IMR-90 (cell line): ENCODE measurements at regions of chr3 and their contacts with region 1.

Region 1: DNA sequence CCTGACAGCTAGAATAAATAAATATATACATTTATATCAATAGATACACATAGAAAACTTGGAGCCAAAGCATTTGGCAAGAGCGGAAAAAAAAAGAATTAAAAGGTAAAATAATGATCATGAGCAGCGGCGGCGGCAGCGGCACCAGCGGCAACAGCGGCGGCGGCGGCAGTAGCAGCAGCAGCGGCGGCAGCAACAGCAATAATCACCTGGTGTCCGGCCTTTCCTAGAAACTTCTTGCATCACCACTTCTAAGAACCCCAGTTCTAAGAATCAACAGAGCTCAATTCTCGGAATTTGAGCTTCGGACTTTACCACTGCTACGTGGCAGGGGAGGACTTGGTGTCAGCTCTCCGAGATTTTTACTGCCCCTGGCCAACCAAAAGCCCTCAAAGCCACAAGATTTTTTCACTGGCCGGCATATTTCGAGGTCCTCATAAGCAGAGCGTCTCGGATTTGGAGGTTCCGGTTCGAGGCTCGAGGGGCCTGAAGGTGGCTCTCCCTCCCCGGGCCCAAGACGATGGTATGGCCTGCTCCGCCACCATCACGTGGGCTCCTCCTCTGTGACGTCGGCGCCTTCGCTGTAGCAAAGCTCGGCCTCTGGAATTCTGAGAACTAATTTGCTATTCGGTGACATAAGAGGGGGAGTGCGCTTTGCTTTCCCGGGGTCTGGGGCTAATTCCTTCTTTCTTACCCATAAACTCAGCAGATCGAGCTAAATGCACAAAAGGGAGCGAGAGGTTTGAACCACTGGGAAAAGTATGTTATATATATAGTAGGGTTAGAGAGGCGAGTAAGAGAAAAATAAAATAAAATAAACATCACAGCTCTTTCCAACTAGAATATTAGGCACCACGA is at the start of gene BCL6:
- DNase-seq: peak; percentile 99
- ATAC-seq: peak; percentile 65
- H3K4me3 ChIP-seq: peak within 1 kb of the TSS; percentile 83
- H3K27ac ChIP-seq: peak within 1 kb of the TSS; percentile 97
- H3K4me1 ChIP-seq: peaks cover 7% of the 10 kb centered on the region
- H3K27me3 ChIP-seq: no peaks in the 10 kb centered on the region
- CTCF ChIP-seq: no peak
- POLR2A ChIP-seq: peak; percentile 96
- RAD21 ChIP-seq: peak; percentile 27; the same call in 1 of the 2 replicates
- total RNA-seq, gene BCL6: 21.4 and 22.6 TPM in 2 replicates

Region 2: DNA sequence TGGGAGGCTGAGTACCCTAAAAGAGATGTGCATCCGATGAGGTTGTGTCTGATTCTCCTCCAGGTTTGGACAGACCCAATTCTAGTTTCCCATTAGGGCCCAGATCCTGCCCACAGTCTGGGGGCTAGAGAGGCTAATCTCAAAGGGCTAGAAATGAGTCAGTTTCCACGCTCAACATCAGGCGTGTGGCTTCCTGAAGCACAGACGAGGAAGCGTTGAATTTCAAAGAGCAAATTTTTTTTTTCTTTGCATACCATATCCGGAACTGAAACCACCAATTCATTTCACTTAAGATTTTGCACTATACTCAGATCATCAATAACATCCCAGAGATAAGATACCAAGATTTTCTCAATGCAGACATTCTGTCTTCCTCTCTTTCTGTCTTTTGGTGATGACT is 173.6 kb after region 1 on chr3:
- CTCF ChIA-PET with region 1: interaction called, 4 read pairs
- POLR2A ChIA-PET with region 1: no interaction called
- dilution Hi-C with region 1: no loop called
- in situ Hi-C with region 1: no loop called
- intact Hi-C with region 1: loop called (anchors 1 kb)
- DNase-seq: no peak
- ATAC-seq: no peak
- H3K4me3 ChIP-seq: no peak overlapping the region
- H3K27ac ChIP-seq: no peak overlapping the region
- H3K4me1 ChIP-seq: peaks cover 27% of the 10 kb centered on the region
- H3K27me3 ChIP-seq: no peaks in the 10 kb centered on the region
- CTCF ChIP-seq: no peak
- POLR2A ChIP-seq: no peak
- RAD21 ChIP-seq: no peak

Region 3: DNA sequence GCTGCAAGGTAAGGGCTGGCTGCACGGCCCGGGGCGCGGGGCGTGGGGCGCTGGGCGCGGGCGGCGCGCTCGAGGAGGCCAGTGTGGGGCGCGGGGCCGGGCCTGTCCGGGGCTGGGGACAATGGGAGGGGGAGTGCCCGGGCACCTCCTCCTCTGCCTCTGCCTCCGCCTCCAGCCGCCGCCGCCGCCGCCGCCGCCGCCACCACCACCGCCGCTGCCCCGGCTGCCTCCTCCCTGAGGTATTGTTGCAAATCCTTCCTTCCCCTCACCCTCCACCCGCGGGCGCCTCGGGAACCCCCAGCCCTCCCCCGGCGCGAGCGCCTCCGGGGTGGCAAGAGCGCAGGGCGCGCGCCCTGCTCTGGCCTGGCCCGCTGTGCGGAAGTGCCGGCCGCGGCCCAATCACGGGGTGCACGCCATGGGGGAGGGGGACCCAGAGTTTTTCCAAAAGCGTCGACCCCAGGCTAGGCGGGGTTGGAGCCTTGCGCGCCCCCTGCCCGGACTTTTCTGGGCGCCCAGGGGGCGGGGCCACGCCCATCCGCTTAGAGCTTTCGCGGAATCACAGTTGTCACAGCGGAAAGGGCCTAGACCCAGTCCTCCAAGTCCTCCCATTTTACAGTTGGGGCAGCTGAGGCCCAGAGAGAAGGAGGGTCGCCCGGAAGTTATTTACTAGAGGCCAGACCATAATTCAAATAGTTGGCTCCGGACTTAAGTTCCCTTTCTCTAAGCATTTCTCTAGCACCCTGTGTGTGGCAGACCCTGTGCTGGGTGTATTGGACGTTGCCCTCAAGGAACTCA is 408.8 kb after region 1 on chr3 and contains the start of gene LPP:
- CTCF ChIA-PET with region 1: interaction called, 4 read pairs
- POLR2A ChIA-PET with region 1: interaction called, 15 read pairs
- dilution Hi-C with region 1: no loop called
- in situ Hi-C with region 1: no loop called
- intact Hi-C with region 1: loop called (anchors 1 kb)
- DNase-seq: peak; percentile 77
- ATAC-seq: peak; percentile 86
- H3K4me3 ChIP-seq: peak within 1 kb of the TSS; percentile 83
- H3K27ac ChIP-seq: peak within 1 kb of the TSS; percentile 97
- H3K4me1 ChIP-seq: peaks cover 30% of the 10 kb centered on the region
- H3K27me3 ChIP-seq: no peaks in the 10 kb centered on the region
- CTCF ChIP-seq: 0 out of 2 replicates have a peak, but pooled peaks have one; percentile 4
- POLR2A ChIP-seq: no peak; the same call in 1 of the 2 replicates
- RAD21 ChIP-seq: peak; percentile 24; the same call in 1 of the 2 replicates
- total RNA-seq, gene LPP: 111 and 130 TPM in 2 replicates

Region 4: DNA sequence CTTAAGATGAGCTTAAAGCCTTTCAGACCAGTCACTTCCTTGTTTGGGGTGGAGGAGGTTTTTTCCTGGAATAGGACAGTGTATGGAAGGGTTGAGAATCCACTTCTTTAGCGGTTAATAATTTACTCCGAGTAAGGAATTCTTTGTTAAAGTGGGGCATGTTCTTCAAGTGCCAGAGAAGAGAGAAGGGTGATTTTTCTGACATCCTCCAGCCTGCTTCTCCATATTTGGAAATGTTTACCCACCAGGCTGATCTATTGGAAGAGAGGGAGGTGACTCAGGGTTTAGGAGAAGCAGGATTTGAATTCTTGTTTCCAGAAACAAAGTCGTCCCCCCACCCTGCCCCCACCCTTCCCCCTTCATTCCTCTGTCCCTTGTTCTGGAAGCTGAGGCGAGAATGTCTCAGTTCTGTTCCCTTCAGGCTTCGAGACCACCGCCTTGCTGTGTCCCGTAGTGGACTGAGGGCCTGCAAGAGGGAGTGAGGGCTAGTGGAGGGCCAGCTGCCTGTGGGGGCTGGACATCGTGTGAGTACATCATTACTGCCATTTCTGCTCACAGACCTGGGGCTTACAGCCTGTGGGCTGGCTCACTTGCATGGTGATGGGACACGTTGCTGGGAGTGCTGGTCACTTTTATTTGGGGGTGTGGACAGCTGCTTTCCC is 467.0 kb after region 1 on chr3:
- CTCF ChIA-PET with region 1: interaction called, 3 read pairs
- POLR2A ChIA-PET with region 1: no interaction called
- dilution Hi-C with region 1: no loop called
- in situ Hi-C with region 1: no loop called
- intact Hi-C with region 1: loop called (anchors 1 kb)
- DNase-seq: peak; percentile 89
- ATAC-seq: peak; percentile 67
- H3K4me3 ChIP-seq: peak overlapping the region; percentile 43
- H3K27ac ChIP-seq: peak overlapping the region; percentile 100
- H3K4me1 ChIP-seq: peaks cover 42% of the 10 kb centered on the region
- H3K27me3 ChIP-seq: no peaks in the 10 kb centered on the region
- CTCF ChIP-seq: no peak
- POLR2A ChIP-seq: no peak
- RAD21 ChIP-seq: no peak

Region 5: DNA sequence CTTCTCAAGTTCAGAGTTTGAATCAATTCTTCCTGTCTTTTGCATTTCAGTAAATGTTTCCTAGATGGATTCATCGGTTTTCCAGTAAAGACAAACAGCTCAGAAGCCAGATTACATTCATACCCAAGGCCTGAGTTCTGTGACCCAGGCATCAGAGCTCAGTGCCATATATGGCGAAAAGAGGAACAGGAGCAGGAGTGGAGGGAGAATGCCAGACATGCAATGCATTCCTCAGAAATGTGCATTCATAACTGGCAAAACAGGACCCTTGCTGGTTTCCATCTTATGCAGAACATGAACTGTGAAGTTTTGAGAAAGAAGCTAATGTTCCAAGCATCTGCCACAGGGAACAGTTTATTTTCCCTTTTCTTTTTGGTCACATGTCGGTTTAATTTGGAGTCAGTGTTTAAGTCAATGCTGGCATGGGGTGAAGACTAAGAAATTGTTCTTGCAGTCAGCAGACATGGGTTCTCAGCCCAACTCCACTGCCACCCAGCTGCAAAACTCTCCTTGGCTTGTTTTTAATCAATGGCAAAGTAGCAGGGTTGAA is 525.1 kb after region 1 on chr3:
- CTCF ChIA-PET with region 1: interaction called, 6 read pairs
- POLR2A ChIA-PET with region 1: interaction called, 4 read pairs
- dilution Hi-C with region 1: no loop called
- in situ Hi-C with region 1: loop called (anchors 10 kb)
- intact Hi-C with region 1: loop called (anchors 1 kb)
- DNase-seq: peak; percentile 96
- ATAC-seq: peak; percentile 50
- H3K4me3 ChIP-seq: no peak overlapping the region
- H3K27ac ChIP-seq: peak overlapping the region; percentile 96
- H3K4me1 ChIP-seq: peaks cover 45% of the 10 kb centered on the region
- H3K27me3 ChIP-seq: no peaks in the 10 kb centered on the region
- CTCF ChIP-seq: no peak
- POLR2A ChIP-seq: no peak
- RAD21 ChIP-seq: peak; percentile 33; the same call in 1 of the 2 replicates

Region 6: DNA sequence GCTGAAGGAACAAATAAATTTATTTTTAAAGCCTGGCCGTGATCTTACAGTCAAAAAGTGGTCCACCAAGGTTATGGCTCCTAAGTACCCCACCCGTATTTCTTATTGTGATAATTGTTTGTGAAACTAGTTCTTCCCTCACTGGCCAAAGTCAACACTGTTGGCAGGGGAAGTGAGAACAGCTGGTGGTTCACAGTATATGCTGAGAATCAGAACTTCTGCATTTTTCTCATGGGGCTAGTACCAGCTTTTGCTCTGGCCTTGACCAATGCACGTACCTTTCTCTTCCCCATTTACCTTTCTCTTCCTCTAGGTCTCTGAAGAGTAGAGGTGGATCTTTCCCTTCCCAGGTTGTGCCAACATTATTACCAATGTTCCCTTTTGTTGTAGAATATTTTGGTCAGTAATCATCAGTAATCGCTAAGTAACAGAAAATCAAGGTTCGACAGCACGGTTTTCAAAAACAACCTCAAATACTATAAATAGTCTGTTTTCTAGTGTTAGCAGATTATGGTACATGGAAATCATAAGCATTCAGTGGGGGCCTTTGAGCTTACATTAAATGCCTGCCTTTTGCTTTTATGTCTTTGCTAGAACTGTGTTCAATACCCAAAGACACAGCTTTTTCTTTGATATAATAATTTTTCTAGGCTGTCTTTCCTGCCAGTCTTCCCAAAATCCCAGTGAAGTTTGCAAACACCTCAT is 676.6 kb after region 1 on chr3:
- CTCF ChIA-PET with region 1: interaction called, 3 read pairs
- POLR2A ChIA-PET with region 1: no interaction called
- dilution Hi-C with region 1: no loop called
- in situ Hi-C with region 1: loop called (anchors 25 kb)
- intact Hi-C with region 1: no loop called
- DNase-seq: no peak
- ATAC-seq: no peak
- H3K4me3 ChIP-seq: no peak overlapping the region
- H3K27ac ChIP-seq: no peak overlapping the region
- H3K4me1 ChIP-seq: peaks cover 5% of the 10 kb centered on the region
- H3K27me3 ChIP-seq: no peaks in the 10 kb centered on the region
- CTCF ChIP-seq: no peak
- POLR2A ChIP-seq: no peak
- RAD21 ChIP-seq: no peak

Region 7: GRCh38 chr3:188683032-188683521 is 937.6 kb after region 1 on chr3:
- CTCF ChIA-PET with region 1: interaction called, 3 read pairs
- POLR2A ChIA-PET with region 1: no interaction called
- dilution Hi-C with region 1: no loop called
- in situ Hi-C with region 1: loop called (anchors 25 kb)
- intact Hi-C with region 1: no loop called
- DNase-seq: peak; percentile 99
- ATAC-seq: peak; percentile 91
- H3K4me3 ChIP-seq: no peak overlapping the region
- H3K27ac ChIP-seq: no peak overlapping the region
- H3K4me1 ChIP-seq: peaks cover 16% of the 10 kb centered on the region
- H3K27me3 ChIP-seq: no peaks in the 10 kb centered on the region
- CTCF ChIP-seq: no peak
- POLR2A ChIP-seq: no peak
- RAD21 ChIP-seq: no peak